Endothelial cell of umbilical vein (primary cell): ENCODE measurements at regions of chr9 and their contacts with region 1.

Region 1: GRCh38 chr9:14322211-14323082 is 8.5 kb upstream of the NFIB start:
- DNase-seq: peak; percentile 93
- H3K4me3 ChIP-seq: peak overlapping the region; percentile 44 to 91 (median 79)
- H3K27ac ChIP-seq: peak overlapping the region; percentile 94
- H3K4me1 ChIP-seq: peaks cover 62% of the 10 kb centered on the region
- H3K27me3 ChIP-seq: no peaks in the 10 kb centered on the region
- CTCF ChIP-seq: peak in 1 of 2 donors; percentile 17
- POLR2A ChIP-seq: peak; percentile 59

Region 2: GRCh38 chr9:13750061-13750460 is 572.4 kb before region 1 on chr9:
- CTCF ChIA-PET with region 1: no interaction called
- POLR2A ChIA-PET with region 1: no interaction called
- dilution Hi-C with region 1: no loop called
- intact Hi-C with region 1: loop called (anchors 5 kb)
- DNase-seq: peak; percentile 96
- H3K4me3 ChIP-seq: no peak overlapping the region
- H3K27ac ChIP-seq: peak overlapping the region; percentile 72
- H3K4me1 ChIP-seq: peaks cover 17% of the 10 kb centered on the region
- H3K27me3 ChIP-seq: no peaks in the 10 kb centered on the region
- CTCF ChIP-seq: no peak
- POLR2A ChIP-seq: peak; percentile 49

Region 3: GRCh38 chr9:13898957-13899356 is 423.5 kb before region 1 on chr9:
- CTCF ChIA-PET with region 1: no interaction called
- POLR2A ChIA-PET with region 1: no interaction called
- dilution Hi-C with region 1: no loop called
- intact Hi-C with region 1: loop called (anchors 5 kb)
- DNase-seq: peak; percentile 83
- H3K4me3 ChIP-seq: no peak overlapping the region
- H3K27ac ChIP-seq: no peak overlapping the region
- H3K4me1 ChIP-seq: peaks cover 31% of the 10 kb centered on the region
- H3K27me3 ChIP-seq: no peaks in the 10 kb centered on the region
- CTCF ChIP-seq: no peak
- POLR2A ChIP-seq: no peak

Region 4: DNA sequence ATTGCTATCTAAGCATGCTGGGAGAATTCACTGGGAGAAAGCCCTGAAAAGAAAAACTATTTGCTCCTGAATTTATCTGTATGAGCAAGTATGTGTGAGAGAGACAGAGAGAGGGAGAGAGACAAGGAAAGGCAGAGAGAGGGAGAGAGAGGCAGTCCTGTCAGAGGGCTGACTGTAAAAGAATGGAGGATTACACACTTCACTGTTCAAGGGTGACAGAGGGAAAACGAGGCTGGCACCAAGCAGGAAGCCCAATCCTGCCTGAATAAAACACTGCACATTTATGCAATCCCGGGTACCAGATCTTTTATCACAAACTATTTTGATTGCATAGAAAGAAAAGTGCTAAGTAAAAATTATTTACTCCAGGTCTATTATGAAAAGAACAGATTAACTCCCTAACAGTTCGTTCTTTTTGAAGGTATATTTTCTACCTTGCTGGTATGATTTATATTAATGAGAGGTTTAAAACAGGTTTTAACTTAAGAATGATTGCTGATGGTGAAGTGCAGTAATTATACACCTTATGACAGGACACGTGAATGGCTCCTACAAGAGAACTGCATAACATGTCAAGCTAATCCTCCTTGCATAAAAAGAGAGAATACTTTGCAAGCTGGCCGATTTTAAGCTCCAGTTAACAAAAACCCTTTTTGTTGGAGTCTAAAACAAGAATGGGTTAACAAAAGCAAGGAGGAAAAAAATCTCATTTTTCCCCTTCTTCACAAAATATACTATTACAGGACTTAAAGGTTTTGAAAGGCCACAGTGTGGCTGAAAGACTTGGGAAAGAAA is 91.1 kb before region 1 on chr9:
- CTCF ChIA-PET with region 1: no interaction called
- POLR2A ChIA-PET with region 1: no interaction called
- dilution Hi-C with region 1: no loop called
- intact Hi-C with region 1: no loop called
- DNase-seq: no peak
- H3K4me3 ChIP-seq: no peak overlapping the region
- H3K27ac ChIP-seq: no peak overlapping the region
- H3K4me1 ChIP-seq: peaks cover 15% of the 10 kb centered on the region
- H3K27me3 ChIP-seq: no peaks in the 10 kb centered on the region
- CTCF ChIP-seq: no peak
- POLR2A ChIP-seq: no peak

Region 5: DNA sequence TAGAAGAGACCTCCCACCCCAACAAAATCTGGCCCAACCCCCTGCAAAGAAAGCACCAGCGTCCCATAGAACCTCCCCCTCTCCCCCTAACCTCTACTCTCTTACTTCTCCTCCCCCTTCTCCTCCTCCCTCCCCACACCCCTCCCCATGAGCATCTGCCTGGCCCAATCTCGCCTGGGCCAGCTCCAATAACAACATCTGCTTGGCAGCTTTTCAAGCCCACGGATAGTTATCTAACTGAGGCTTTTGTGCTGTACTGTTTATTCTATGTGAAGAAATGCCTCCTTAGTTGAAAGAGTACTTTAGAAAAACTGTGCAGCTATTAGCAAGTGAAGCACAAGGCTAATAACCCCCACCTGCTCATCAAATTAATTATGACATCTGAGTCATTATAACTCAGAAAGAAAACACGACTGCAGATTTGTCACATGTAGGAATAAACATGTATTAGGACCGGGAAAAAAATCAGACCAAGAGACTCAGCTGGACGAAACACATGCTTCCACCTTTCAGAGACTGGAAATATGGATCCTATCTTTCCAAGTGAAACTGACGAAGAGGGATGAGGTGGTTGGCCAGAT is 51.3 kb before region 1 on chr9:
- CTCF ChIA-PET with region 1: no interaction called
- POLR2A ChIA-PET with region 1: no interaction called
- dilution Hi-C with region 1: no loop called
- intact Hi-C with region 1: no loop called
- DNase-seq: peak; percentile 95
- H3K4me3 ChIP-seq: peak overlapping the region in 1 of 3 experiments; percentile 33
- H3K27ac ChIP-seq: peak overlapping the region; percentile 46
- H3K4me1 ChIP-seq: peaks cover 64% of the 10 kb centered on the region
- H3K27me3 ChIP-seq: no peaks in the 10 kb centered on the region
- CTCF ChIP-seq: no peak
- POLR2A ChIP-seq: no peak

Region 6: GRCh38 chr9:14347406-14348122 is 25.1 kb after region 1 on chr9:
- CTCF ChIA-PET with region 1: interaction called, 25 read pairs
- POLR2A ChIA-PET with region 1: no interaction called
- dilution Hi-C with region 1: no loop called
- intact Hi-C with region 1: loop called (anchors 1 kb)
- DNase-seq: peak; percentile 60
- H3K4me3 ChIP-seq: peak overlapping the region; percentile 17 to 57 (median 48)
- H3K27ac ChIP-seq: peak overlapping the region; percentile 32
- H3K4me1 ChIP-seq: peaks cover 57% of the 10 kb centered on the region
- H3K27me3 ChIP-seq: no peaks in the 10 kb centered on the region
- CTCF ChIP-seq: no peak
- POLR2A ChIP-seq: peak; percentile 31

Region 7: DNA sequence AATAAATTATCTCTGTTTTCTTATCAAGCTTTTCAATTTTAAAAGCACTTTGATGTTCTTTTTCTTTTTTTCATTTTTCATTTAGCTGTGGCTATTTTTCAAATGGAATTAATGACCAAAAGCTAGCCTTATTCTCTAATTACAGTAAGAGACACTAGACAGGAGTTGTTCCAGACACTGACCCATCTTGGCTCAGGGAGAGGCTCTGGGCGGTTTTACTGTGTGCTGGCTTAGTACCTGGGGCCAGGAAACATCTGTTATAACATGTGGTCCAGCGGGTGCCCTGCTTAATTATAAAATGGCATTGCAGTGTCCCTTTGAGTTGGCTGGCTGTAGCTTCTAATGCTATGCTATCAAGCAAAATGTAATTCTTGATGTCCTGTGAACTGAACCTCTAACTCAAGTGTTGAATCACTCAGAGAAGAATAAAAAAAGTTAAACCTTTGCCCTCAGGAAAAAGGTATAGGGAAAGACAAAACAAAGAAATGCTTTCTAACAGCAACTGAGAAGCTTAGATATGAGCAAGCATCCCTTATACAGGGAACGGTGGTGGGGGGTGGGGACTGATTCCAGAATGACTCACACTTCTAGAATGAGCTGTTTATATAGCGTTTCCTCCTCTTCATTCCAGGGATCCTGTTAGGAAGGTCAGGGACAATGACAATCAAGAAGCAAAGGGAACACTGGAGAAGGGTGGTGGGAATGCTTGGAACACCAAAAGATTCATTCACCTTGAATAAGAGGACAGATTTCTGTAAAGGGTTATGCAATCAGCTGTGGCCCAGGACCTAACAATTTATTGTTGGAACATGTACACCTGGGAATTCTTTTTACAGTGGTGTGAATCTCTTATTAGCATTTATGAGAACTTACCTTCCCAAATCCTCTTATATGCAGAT is 50.2 kb after region 1 on chr9:
- CTCF ChIA-PET with region 1: no interaction called
- POLR2A ChIA-PET with region 1: no interaction called
- dilution Hi-C with region 1: no loop called
- intact Hi-C with region 1: loop called (anchors 1 kb)
- DNase-seq: peak; percentile 98
- H3K4me3 ChIP-seq: peak overlapping the region in 1 of 3 experiments; percentile 29
- H3K27ac ChIP-seq: peak overlapping the region; percentile 96
- H3K4me1 ChIP-seq: peaks cover 36% of the 10 kb centered on the region
- H3K27me3 ChIP-seq: no peaks in the 10 kb centered on the region
- CTCF ChIP-seq: no peak
- POLR2A ChIP-seq: peak; percentile 70

Region 8: GRCh38 chr9:14428781-14429230 is 106.4 kb after region 1 on chr9:
- CTCF ChIA-PET with region 1: interaction called, 3 read pairs
- POLR2A ChIA-PET with region 1: no interaction called
- dilution Hi-C with region 1: no loop called
- intact Hi-C with region 1: loop called (anchors 2 kb)
- DNase-seq: peak; percentile 68
- H3K4me3 ChIP-seq: no peak overlapping the region
- H3K27ac ChIP-seq: no peak overlapping the region
- H3K4me1 ChIP-seq: peaks cover 15% of the 10 kb centered on the region
- H3K27me3 ChIP-seq: no peaks in the 10 kb centered on the region
- CTCF ChIP-seq: peak; percentile 79 to 84
- POLR2A ChIP-seq: no peak